ENCODE measurements at regions of chr9 and their contacts with region 1.

Region 1: DNA sequence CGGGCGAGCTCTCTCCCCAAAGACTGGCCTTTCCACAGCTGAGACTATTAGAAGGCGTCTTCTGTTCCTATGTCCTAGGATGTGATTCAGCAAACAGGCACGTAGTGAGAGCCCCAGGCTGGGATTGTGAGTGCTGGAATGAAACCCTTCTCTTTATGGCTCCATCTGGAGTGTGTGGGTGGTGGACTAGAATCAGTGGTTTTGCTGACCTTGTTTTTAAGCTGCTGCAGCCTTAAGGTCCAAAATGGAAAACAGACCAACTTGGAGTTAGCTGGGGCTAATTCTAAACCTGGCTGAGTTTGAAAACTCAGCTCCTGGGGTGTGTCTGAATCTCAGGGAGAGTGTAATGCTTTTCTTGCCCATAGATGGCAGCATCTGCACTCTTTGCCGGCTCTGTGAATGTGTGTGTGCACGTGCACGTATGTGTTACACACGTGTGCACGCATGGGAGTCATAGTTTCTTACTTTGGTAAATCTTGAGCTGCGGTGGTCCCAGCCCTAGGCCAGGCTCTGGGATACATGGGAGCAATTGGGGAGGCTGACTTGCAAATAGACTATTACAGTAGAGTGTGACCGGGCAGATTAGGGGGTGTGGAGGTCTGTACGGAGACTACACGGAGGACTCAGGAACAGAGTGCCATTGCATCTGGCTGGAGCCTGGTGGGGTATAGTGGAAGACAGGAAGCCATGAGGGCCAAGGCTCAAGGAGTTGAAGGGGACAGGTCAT is 10.7 kb downstream of the GSN start:
- DNase-seq: peak in 1 of 2 donors; percentile 83
- ATAC-seq: peak; percentile 55 to 68 (median 62)
- H3K4me3 ChIP-seq: peak overlapping the region in 2 of 10 donors; percentile 1 to 8
- H3K27ac ChIP-seq: peak overlapping the region; percentile 4 to 100 (median 98)
- H3K4me1 ChIP-seq: peaks cover 40 to 94% (median 75%) of the 10 kb centered on the region in 9 donors
- H3K27me3 ChIP-seq: no peaks in the 10 kb centered on the region
- CTCF ChIP-seq: peak; percentile 74 to 93 (median 83)

Region 2: DNA sequence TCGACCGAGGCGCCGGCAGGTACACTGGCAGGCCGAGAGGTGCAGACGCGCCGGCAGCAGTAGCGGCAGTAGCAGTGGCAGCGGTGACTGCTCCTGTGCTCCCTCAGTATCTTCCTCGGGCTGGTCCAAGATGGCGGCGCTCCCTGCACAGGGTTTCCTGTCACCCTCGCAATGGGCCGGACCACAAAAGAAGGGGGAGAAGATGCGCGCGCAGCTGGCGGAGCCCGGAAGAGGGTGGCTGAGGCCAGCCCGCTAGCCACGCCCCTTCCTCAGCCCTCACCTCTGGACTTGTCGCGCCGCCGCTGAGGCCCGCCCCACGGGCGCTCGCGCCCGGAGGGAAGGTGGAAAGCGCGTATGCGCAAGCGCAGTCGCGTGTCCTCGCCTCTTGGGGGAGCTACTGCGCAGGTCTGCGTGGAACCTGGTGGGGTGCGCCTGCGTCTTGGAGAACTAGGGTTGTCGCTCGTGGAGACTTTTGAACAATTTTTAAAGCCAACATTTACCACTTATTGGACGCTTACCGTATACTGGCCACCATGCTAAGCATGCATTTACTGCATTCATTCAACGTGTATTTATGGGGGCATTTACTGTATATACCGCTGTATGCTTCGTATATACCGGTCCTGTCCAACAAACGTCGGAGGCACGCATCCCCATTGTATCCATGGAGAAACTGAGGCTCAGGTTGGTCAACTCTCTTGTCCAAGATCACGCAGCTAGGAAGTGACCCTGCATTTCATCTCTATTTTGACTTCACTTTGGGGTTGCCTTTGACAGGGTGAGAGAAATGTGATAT is 76.8 kb before region 1 on chr9 and contains the start of gene RAB14:
- intact Hi-C with region 1: loop called in 1 of 10 experiments (anchors 5 kb)
- DNase-seq: peak; percentile 100
- ATAC-seq: peak; percentile 97 to 99 (median 98)
- H3K4me3 ChIP-seq: peak within 1 kb of the TSS; percentile 70 to 99 (median 88)
- H3K27ac ChIP-seq: peak within 1 kb of the TSS; percentile 86 to 98 (median 96)
- H3K4me1 ChIP-seq: peaks cover 1 to 44% (median 41%) of the 10 kb centered on the region in 9 donors
- H3K27me3 ChIP-seq: no peaks in the 10 kb centered on the region
- CTCF ChIP-seq: peak; percentile 28 to 81 (median 73)
- total RNA-seq, gene RAB14: 45.4 to 60.7 (median 52.1) TPM

Region 3: DNA sequence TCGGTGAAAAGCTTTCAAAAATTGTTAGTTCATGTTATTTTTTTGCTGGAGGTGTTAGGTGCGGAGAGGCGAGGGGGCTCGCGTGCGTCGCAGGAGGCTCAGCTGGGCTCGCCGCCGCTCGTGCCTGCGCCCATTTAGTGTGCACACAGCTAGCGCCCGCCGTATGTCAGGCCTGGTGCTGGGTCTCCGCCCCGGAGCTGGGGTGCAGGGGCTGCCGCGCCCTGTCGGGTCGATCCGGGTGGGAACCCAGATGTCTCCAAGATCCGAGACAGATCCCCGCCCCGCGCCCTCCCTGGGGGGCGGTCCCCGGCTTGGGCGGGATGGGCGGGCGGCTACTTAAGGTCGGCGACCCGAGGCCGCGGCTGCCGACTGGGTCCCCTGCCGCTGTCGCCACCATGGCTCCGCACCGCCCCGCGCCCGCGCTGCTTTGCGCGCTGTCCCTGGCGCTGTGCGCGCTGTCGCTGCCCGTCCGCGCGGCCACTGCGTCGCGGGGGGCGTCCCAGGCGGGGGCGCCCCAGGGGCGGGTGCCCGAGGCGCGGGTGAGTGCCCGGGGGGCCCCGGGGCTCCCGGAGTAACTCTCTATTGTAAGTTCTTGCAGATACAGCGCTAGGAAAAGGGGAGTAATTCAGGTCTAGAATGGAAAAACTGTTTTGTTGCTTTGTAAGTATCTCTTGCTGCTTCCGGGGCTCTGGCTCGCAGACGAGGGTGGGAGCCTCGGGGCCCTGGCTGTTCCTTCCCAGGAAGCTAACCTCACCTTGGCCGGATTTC is 21.0 kb after region 1 on chr9:
- intact Hi-C with region 1: loop called in 2 of 10 experiments (anchors 2 kb)
- DNase-seq: peak; percentile 89 to 91
- ATAC-seq: peak; percentile 76 to 83 (median 79)
- H3K4me3 ChIP-seq: peak overlapping the region; percentile 56 to 81 (median 68)
- H3K27ac ChIP-seq: peak overlapping the region; percentile 82 to 100 (median 94)
- H3K4me1 ChIP-seq: peaks cover 38 to 96% (median 93%) of the 10 kb centered on the region in 9 donors
- H3K27me3 ChIP-seq: no peaks in the 10 kb centered on the region
- CTCF ChIP-seq: peak in 2 of 9 donors; percentile 10 to 22

Region 4: DNA sequence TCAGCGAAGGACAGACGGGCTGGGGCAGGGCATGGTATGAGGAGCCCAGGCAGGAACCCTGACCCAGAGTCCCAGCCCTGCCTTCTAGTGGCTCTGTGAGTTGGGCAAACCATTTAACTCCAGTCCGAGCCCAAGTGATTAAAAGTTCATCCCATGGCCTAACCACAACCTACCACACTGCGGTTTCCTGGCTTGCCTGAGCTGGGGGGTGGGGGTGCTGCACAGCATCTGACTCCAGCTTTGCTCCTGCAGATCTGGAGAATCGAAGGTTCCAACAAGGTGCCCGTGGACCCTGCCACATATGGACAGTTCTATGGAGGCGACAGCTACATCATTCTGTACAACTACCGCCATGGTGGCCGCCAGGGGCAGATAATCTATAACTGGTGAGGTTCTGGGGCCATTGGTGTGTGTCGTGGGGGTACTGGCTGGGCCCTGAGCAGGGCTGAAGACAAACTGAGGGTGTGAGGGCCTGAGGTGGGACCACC is 42.4 kb after region 1 on chr9:
- intact Hi-C with region 1: loop called in 5 of 10 experiments (anchors 5 kb)
- DNase-seq: no peak
- ATAC-seq: no peak
- H3K4me3 ChIP-seq: no peak overlapping the region
- H3K27ac ChIP-seq: peak overlapping the region in 9 of 10 donors; percentile 45 to 98 (median 78)
- H3K4me1 ChIP-seq: peaks cover 27 to 97% (median 58%) of the 10 kb centered on the region in 9 donors
- H3K27me3 ChIP-seq: no peaks in the 10 kb centered on the region
- CTCF ChIP-seq: no peak

Region 5: DNA sequence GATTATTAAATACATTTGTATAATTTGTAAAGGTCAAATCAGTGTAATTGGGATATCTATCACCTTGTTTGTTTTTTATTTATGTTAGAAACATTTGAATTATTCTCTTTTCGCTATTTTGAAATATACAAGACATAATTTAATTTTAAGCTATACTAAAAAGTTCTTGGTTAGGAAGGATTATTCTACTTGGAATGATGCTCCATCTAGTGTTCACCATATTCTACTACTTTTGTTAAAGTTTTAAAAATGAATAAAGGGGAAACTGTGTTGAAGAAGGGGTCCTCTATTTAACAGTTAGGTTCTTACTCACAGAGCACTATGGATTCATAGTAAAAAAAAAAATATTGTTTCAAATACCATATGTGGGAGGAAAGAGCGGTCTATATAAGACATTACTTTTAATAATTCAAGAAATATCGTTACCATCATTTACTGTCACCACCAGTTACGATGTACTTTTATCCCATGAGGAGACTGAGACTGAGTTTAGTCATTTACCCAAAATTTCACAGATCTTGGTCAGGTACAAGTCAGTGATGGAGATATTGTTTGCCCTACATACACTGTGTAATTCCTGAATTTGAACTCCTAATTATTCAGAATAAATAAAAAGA is 97.6 kb after region 1 on chr9:
- intact Hi-C with region 1: loop called in 3 of 10 experiments (anchors 2 to 5 kb)
- DNase-seq: no peak
- ATAC-seq: peak in 1 of 8 donors; percentile 42
- H3K4me3 ChIP-seq: no peak overlapping the region
- H3K27ac ChIP-seq: peak overlapping the region in 2 of 10 donors; percentile 97
- H3K4me1 ChIP-seq: peaks cover 3 to 48% (median 38%) of the 10 kb centered on the region in 9 donors
- H3K27me3 ChIP-seq: no peaks in the 10 kb centered on the region
- CTCF ChIP-seq: peak; percentile 11 to 74 (median 55)

Measured in heart right ventricle (tissue), 16 donors.